ENCODE measurements at regions of chr2 and their contacts with region 1.

Region 1: GRCh38 chr2:11477994-11478393 is 12.0 kb upstream of the E2F6 start:
- DNase-seq: peak; percentile 73 to 91
- ATAC-seq: peak; percentile 72 to 86
- H3K4me3 ChIP-seq: no peak overlapping the region
- H3K27ac ChIP-seq: no peak overlapping the region
- H3K4me1 ChIP-seq: no peaks in the 10 kb centered on the region
- CTCF ChIP-seq: peak; percentile 99
- EP300 ChIP-seq: no peak
- POLR2A ChIP-seq: no peak
- RAD21 ChIP-seq: peak; percentile 87 to 88

Region 2: GRCh38 chr2:10591207-10591606 is 886.8 kb before region 1 on chr2:
- CTCF ChIA-PET with region 1: no interaction called
- POLR2A ChIA-PET with region 1: no interaction called
- DNase-seq: no peak
- ATAC-seq: no peak
- H3K4me3 ChIP-seq: no peak overlapping the region
- H3K27ac ChIP-seq: no peak overlapping the region
- H3K4me1 ChIP-seq: peaks cover 8% of the 10 kb centered on the region; the same call in 2 of the 3 replicates
- CTCF ChIP-seq: no peak
- EP300 ChIP-seq: no peak
- POLR2A ChIP-seq: no peak
- RAD21 ChIP-seq: no peak

Region 3: GRCh38 chr2:11305958-11306357 is 172.0 kb before region 1 on chr2:
- CTCF ChIA-PET with region 1: no interaction called
- POLR2A ChIA-PET with region 1: no interaction called
- DNase-seq: no peak
- ATAC-seq: peak in 1 of 2 experiments; percentile 49; a peak in 3 of 6 replicates
- H3K4me3 ChIP-seq: no peak overlapping the region
- H3K27ac ChIP-seq: no peak overlapping the region
- H3K4me1 ChIP-seq: peaks cover 33% of the 10 kb centered on the region
- CTCF ChIP-seq: no peak
- EP300 ChIP-seq: no peak
- POLR2A ChIP-seq: no peak
- RAD21 ChIP-seq: no peak

Region 4: GRCh38 chr2:11430729-11431128 is 47.3 kb before region 1 on chr2:
- CTCF ChIA-PET with region 1: no interaction called
- POLR2A ChIA-PET with region 1: no interaction called
- DNase-seq: no peak
- ATAC-seq: no peak
- H3K4me3 ChIP-seq: no peak overlapping the region
- H3K27ac ChIP-seq: no peak overlapping the region
- H3K4me1 ChIP-seq: no peaks in the 10 kb centered on the region
- CTCF ChIP-seq: no peak
- EP300 ChIP-seq: no peak
- POLR2A ChIP-seq: no peak
- RAD21 ChIP-seq: no peak

Region 5: GRCh38 chr2:11465497-11466406 is 12.2 kb before region 1 on chr2 and contains the start of gene E2F6:
- CTCF ChIA-PET with region 1: interaction called, 20 read pairs
- POLR2A ChIA-PET with region 1: interaction called, 6 read pairs
- DNase-seq: peak; percentile 93 to 97
- ATAC-seq: peak; percentile 88 to 90
- H3K4me3 ChIP-seq: peak within 1 kb of the TSS; percentile 59
- H3K27ac ChIP-seq: peak within 1 kb of the TSS; percentile 91 to 98
- H3K4me1 ChIP-seq: peaks cover 36% of the 10 kb centered on the region
- CTCF ChIP-seq: no peak
- EP300 ChIP-seq: no peak
- POLR2A ChIP-seq: peak; percentile 72
- RAD21 ChIP-seq: no peak
- polyA plus RNA-seq, gene E2F6: 38.0 and 41.7 TPM in 2 replicates

Region 6: DNA sequence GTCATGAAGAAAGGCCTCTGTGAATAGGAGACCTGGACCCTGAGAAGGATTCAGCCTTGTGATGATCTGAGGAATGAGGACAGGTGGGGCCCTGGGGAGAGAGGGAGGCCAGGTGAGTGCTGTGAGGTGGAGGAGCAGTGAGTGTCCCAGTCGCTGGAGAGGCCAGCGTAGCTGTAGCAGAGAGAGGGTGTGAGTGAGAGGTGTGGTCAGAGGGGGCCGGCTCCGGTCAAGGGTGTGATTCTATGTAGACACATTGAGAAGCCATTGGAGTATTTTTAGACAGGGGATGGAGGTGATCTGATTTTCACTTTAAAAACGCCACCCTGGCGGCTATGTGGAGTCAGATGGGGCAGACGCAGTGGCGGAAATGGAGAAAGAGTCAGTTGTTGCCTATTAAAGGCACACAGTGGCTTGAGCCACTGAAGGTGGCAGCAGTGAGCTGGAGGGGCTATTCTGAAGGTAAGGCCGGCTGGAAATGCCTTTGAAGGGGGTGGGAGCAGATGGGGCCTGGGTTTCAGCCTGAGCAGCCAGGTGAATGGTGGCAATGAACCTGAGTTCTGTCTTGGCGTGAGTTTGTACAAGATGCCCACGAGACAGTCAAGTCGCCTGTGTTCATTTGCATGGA is 111.4 kb after region 1 on chr2:
- CTCF ChIA-PET with region 1: interaction called, 350 read pairs
- POLR2A ChIA-PET with region 1: no interaction called
- DNase-seq: no peak
- ATAC-seq: peak; percentile 15 to 62; a peak in 3 of 6 replicates
- H3K4me3 ChIP-seq: no peak overlapping the region
- H3K27ac ChIP-seq: no peak overlapping the region
- H3K4me1 ChIP-seq: no peaks in the 10 kb centered on the region
- CTCF ChIP-seq: peak; percentile 27; the same call in 2 of the 3 replicates
- EP300 ChIP-seq: no peak
- POLR2A ChIP-seq: no peak
- RAD21 ChIP-seq: peak; percentile 13 to 26; a peak in 1 of 5 replicates

Measured in A549 (cell line).